AG04450 (cell line): ENCODE measurements at regions of chr13 and their contacts with region 1.

Region 1: GRCh38 chr13:31431722-31432137 is 232.0 kb downstream of the B3GLCT start:
- DNase-seq: no peak
- H3K4me3 ChIP-seq: no peak overlapping the region
- H3K27ac ChIP-seq: no peak overlapping the region
- H3K27me3 ChIP-seq: peaks cover 3% of the 10 kb centered on the region
- CTCF ChIP-seq: peak; percentile 77

Region 2: DNA sequence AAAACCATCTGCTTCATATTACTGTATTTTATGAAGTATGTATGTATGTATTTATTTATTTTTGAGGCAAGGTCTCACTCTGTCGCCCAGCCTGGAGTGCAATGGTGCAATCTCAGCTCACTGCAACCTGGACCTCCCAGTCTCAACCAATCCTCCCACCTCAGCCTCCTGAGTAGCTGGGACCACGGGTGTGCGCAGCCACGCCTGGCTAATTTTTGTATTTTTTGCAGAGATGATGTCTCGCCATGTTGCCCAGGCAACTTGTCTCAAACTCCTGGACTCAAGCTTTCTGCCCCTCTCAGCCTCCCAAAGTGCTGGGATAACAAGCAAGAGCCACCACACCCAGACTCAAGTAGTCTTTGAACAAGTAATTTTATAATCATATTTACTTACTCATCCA is 1129.9 kb before region 1 on chr13:
- CTCF ChIA-PET with region 1: no interaction called
- POLR2A ChIA-PET with region 1: no interaction called
- DNase-seq: no peak
- H3K4me3 ChIP-seq: no peak overlapping the region
- H3K27ac ChIP-seq: peak overlapping the region; percentile 2
- H3K27me3 ChIP-seq: no peaks in the 10 kb centered on the region
- CTCF ChIP-seq: no peak

Region 3: DNA sequence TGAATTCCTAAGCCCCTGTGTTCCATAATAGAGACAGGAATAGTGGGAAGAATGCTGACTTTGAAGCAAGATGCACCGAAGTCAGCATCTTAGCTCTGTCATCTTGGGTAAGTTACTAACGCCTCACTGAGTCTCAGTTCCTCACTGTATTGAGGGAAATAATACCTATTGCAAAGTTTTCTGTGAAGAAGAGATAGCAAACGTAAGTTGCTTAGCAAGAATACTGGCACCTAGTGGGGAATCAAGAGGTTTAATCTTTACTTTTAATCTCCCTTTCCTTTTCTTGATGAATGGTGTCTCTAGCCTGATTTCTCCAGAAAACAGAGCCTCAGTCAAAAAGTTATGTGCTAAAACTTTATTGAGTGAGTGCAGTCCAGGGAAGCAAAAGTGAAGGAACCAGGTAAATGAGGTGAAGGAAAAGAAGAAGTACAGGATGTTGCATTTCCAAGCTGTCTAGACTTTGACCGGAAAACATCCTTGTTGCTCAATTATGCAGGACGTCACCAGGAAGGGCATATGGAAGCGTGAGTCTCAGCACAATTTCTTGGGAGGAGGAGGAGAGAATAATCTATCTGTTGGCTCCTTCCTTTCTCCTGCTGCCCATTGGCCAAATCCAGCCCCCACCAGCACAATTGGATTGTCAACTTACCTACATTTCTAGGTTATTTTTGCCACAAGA is 21.9 kb before region 1 on chr13:
- CTCF ChIA-PET with region 1: interaction called, 10 read pairs
- POLR2A ChIA-PET with region 1: no interaction called
- DNase-seq: no peak
- H3K4me3 ChIP-seq: no peak overlapping the region
- H3K27ac ChIP-seq: no peak overlapping the region
- H3K27me3 ChIP-seq: peaks cover 8% of the 10 kb centered on the region
- CTCF ChIP-seq: peak; percentile 34

Region 4: GRCh38 chr13:31441800-31442506 is 10.2 kb after region 1 on chr13:
- CTCF ChIA-PET with region 1: interaction called, 22 read pairs
- POLR2A ChIA-PET with region 1: no interaction called
- DNase-seq: no peak
- H3K4me3 ChIP-seq: no peak overlapping the region
- H3K27ac ChIP-seq: no peak overlapping the region
- H3K27me3 ChIP-seq: peaks cover 4% of the 10 kb centered on the region
- CTCF ChIP-seq: no peak

Region 5: GRCh38 chr13:31742097-31742734 is 310.5 kb after region 1 on chr13:
- CTCF ChIA-PET with region 1: interaction called, 59 read pairs
- POLR2A ChIA-PET with region 1: no interaction called
- DNase-seq: peak; percentile 42
- H3K4me3 ChIP-seq: no peak overlapping the region; the same call in none of the 2 replicates
- H3K27ac ChIP-seq: no peak overlapping the region
- H3K27me3 ChIP-seq: no peaks in the 10 kb centered on the region
- CTCF ChIP-seq: peak; percentile 99

Region 6: GRCh38 chr13:31797154-31797775 is 365.5 kb after region 1 on chr13:
- CTCF ChIA-PET with region 1: interaction called, 20 read pairs
- POLR2A ChIA-PET with region 1: no interaction called
- DNase-seq: peak; percentile 2
- H3K4me3 ChIP-seq: no peak overlapping the region
- H3K27ac ChIP-seq: no peak overlapping the region
- H3K27me3 ChIP-seq: peaks cover 5% of the 10 kb centered on the region
- CTCF ChIP-seq: peak; percentile 57